ENCODE measurements at regions of chr11 and their contacts with region 1.

Region 1: GRCh38 chr11:65366340-65366773 is 11.8 kb downstream of the TIGD3 start:
- DNase-seq: peak; percentile 73
- ATAC-seq: peak; percentile 58
- H3K4me3 ChIP-seq: no peak overlapping the region
- H3K4me3 Mint-ChIP-seq: no peak overlapping the region
- H3K27ac ChIP-seq: no peak overlapping the region
- H3K27ac Mint-ChIP-seq: no peak overlapping the region
- H3K4me1 ChIP-seq: peaks cover 17 to 33% of the 10 kb centered on the region in 2 donors
- H3K4me1 Mint-ChIP-seq: peaks cover 21% of the 10 kb centered on the region
- H3K27me3 ChIP-seq: no peaks in the 10 kb centered on the region
- H3K27me3 Mint-ChIP-seq: no peaks in the 10 kb centered on the region
- CTCF ChIP-seq: peak; percentile 81

Region 2: DNA sequence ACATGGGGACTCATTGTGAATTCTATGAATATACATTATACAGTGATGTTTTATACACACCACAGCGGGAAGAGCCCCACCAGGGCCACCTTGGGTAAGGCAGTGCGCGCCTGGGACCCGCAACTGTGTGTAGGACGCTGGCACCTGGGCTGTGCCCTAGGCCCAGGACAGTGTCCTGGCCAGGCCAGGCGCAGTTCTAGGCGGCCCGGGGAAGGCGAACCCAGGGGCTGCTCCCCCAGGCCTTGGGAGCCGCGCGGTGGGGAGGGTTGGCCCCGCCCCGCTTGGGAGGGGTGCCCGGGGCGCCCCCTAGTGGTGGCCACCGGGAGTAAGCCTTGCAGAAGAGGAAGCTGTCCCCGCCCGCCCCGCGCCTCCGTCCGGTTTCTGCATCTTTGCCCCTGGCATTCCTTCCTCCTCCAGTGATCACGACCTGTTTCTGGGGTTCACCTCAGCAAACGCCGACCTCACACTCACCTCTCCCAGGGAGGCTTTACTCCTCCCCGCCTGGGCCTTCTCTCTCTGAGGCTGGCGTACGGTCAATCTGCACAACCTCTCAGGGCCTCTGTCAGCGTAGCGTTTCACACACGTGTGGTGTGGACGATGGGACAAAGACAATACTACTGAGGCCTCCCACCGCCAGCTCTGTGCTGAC is 478.5 kb before region 1 on chr11:
- CTCF ChIA-PET with region 1: no interaction called
- POLR2A ChIA-PET with region 1: no interaction called
- intact Hi-C with region 1: no loop called
- DNase-seq: peak; percentile 90
- ATAC-seq: peak; percentile 97
- H3K4me3 ChIP-seq: peak overlapping the region in 4 of 5 experiments; percentile 14 to 50 (median 42)
- H3K4me3 Mint-ChIP-seq: peak overlapping the region; percentile 84
- H3K27ac ChIP-seq: peak overlapping the region; percentile 43 to 56
- H3K27ac Mint-ChIP-seq: peak overlapping the region; percentile 88
- H3K4me1 ChIP-seq: peaks cover 25 to 33% of the 10 kb centered on the region in 2 donors
- H3K4me1 Mint-ChIP-seq: peaks cover 34% of the 10 kb centered on the region
- H3K27me3 ChIP-seq: no peaks in the 10 kb centered on the region
- H3K27me3 Mint-ChIP-seq: no peaks in the 10 kb centered on the region
- CTCF ChIP-seq: peak; percentile 91

Region 3: DNA sequence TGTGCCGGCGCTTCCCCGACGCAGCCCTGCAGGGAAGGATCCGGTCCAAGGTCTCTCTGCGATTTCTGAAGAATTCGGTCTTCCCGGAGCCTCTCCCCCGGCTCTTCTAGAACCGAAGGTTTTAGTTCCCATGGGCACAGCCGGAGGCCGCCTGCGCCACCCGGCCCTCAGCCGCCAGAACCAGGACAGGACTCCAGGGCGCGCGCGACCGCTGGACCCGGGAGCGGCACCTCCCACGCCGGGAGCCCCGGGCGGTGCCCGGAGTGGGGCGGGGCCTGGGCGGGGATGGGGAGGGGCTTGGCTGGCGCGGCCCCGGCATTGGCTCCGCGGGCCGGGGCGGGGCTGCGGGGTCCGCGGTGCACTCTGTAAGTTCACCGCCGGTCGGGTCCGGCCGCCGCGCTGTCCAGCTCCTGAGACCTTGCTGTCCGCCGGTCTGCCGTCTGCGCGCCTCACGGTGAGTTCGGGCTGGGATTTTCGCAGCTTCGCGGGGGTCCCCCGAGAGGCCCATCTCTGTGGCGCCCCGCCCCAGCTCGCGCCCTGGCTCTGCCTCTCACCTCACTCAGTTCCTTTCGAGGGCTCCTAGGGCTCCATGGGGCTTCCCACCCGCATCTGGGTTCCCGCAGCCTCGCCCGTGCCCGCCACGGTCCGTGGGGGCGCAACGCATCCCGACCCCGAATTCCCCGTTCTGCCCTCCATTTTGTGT is 51.7 kb before region 1 on chr11 and contains the start of gene CDC42EP2:
- CTCF ChIA-PET with region 1: interaction called, 11 read pairs
- POLR2A ChIA-PET with region 1: no interaction called
- intact Hi-C with region 1: no loop called
- DNase-seq: peak; percentile 85
- ATAC-seq: peak; percentile 96
- H3K4me3 ChIP-seq: peak within 1 kb of the TSS; percentile 40 to 85 (median 81)
- H3K4me3 Mint-ChIP-seq: peak within 1 kb of the TSS; percentile 84
- H3K27ac ChIP-seq: peak within 1 kb of the TSS in 1 of 2 donors; percentile 51
- H3K27ac Mint-ChIP-seq: no peak within 1 kb of the TSS
- H3K4me1 ChIP-seq: peaks cover 8 to 17% of the 10 kb centered on the region in 2 donors
- H3K4me1 Mint-ChIP-seq: peaks cover 10% of the 10 kb centered on the region
- H3K27me3 ChIP-seq: peaks cover 0 to 12% (median 5%) of the 10 kb centered on the region in 4 experiments
- H3K27me3 Mint-ChIP-seq: peaks cover 9% of the 10 kb centered on the region
- CTCF ChIP-seq: no peak
- total RNA-seq, gene CDC42EP2: 1.1 and 1.5 TPM in 2 replicates

Region 4: DNA sequence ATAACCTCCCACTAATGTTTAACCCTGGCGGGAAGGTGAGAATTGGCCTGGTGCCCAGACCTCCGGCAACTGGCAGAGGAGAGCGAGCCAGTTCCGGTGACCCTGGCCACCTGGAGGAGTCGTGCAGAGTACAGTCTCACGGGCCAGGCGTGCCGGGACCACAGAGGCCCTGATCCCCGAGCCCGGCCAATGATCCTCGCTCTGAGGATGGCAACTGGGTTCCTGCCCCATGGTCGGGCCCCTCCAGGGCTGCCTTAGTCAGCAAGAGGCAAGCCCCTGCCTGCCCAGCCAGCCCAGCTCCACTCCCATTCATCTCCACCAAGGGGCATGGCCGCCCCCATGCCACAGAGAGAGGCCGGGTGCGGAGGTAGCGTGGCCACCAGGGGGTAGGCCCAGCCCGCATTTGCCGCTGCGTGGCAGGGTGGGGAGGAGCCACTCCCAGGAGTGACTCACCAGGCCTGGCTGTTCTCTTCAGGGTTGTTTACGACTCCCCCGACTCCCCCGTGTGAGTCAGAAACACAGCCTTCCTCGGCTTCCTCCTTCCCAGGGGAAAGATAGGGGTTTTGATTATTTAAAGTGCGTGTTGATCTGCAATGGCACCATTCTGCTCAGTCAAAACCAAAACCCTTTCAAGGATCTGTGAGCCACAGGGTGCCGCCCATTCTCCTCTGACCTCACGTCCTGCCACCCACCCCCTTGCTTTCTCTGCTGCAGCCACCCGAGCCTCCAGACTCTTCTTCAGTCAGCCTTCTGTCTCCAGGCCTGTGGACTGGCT is 15.9 kb after region 1 on chr11 and contains the start of gene SLC25A45:
- CTCF ChIA-PET with region 1: interaction called, 17 read pairs
- POLR2A ChIA-PET with region 1: interaction called, 12 read pairs
- intact Hi-C with region 1: loop called (anchors 2 kb)
- DNase-seq: peak; percentile 93
- ATAC-seq: peak; percentile 83
- H3K4me3 ChIP-seq: peak within 1 kb of the TSS; percentile 44 to 81 (median 61)
- H3K4me3 Mint-ChIP-seq: peak within 1 kb of the TSS; percentile 92
- H3K27ac ChIP-seq: peak within 1 kb of the TSS; percentile 91
- H3K27ac Mint-ChIP-seq: peak within 1 kb of the TSS; percentile 98
- H3K4me1 ChIP-seq: peaks cover 35 to 71% of the 10 kb centered on the region in 2 donors
- H3K4me1 Mint-ChIP-seq: peaks cover 63% of the 10 kb centered on the region
- H3K27me3 ChIP-seq: no peaks in the 10 kb centered on the region
- H3K27me3 Mint-ChIP-seq: no peaks in the 10 kb centered on the region
- CTCF ChIP-seq: peak; percentile 85
- total RNA-seq, gene SLC25A45: 16.4 and 18.2 TPM in 2 replicates

Region 5: DNA sequence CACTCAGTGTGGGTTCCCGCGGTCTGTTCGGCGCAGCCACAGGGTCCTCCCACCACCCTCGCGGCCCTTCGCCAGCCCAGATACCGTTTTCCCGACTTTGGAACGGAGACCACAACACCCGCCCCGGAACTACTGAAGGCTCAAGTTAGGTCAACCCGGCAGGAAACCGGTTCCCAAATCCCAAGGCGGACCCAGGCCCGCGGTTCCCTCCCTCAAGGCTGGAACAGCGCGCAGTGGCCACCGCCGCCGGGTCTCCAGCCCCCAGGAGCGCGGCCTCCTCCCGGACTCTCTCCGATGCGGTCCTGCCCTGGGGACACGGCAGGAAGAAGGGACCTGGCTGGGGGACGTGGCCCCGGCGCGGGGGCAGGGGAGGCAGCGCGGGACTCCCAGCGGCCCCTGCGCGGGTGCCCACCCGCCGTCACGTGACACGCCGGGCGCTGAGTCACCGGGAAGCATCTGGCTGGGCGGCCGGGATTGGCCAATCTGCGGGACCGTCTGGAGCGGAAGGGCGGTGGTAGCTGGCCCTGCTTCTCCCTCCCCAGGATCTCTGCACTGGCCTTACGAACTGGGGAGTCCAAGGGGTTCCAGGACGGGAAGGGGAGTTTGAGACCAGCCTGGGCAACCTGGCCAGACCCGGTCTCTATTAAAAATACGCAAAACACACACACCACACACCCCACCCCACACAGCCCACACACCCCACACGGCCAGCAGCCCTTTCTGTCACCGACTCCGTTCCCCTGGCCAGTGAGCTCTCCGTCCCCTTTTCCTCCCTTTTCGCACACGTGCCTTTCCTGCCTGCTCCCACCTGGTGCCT is 111.0 kb after region 1 on chr11:
- CTCF ChIA-PET with region 1: interaction called, 4 read pairs
- POLR2A ChIA-PET with region 1: no interaction called
- intact Hi-C with region 1: loop called (anchors 1 kb)
- DNase-seq: peak; percentile 90
- ATAC-seq: peak; percentile 87
- H3K4me3 ChIP-seq: peak overlapping the region; percentile 61 to 93 (median 83)
- H3K4me3 Mint-ChIP-seq: peak overlapping the region; percentile 96
- H3K27ac ChIP-seq: peak overlapping the region; percentile 88 to 92
- H3K27ac Mint-ChIP-seq: peak overlapping the region; percentile 99
- H3K4me1 ChIP-seq: peaks cover 11 to 32% of the 10 kb centered on the region in 2 donors
- H3K4me1 Mint-ChIP-seq: peaks cover 14% of the 10 kb centered on the region
- H3K27me3 ChIP-seq: no peaks in the 10 kb centered on the region
- H3K27me3 Mint-ChIP-seq: no peaks in the 10 kb centered on the region
- CTCF ChIP-seq: no peak

Region 6: DNA sequence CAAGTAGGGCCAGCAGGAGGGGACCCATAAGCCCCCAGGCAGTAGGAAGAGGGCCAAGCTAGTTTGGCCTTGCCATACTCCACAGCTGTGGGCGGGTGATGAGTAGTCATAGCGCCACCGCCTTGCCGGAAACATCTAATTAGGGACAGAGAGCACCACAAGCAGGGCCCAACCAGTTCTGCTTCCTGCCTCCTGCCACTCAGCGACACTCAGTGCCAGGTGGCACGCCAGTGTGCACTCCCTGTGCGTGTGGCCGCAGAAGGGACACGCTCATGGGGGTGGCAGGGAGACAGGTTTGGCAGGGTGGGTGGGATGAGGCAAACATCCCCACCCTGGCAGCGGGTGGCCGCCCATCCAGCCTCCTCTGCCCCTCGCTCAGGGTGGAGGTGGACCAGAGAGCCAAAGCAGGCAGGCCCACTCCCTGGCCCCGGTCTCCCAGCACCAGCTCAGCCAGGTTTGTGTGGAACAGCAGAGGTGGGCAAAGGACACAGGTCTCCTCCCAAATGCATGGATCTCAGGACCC is 425.4 kb after region 1 on chr11:
- CTCF ChIA-PET with region 1: no interaction called
- POLR2A ChIA-PET with region 1: interaction called, 12 read pairs
- intact Hi-C with region 1: no loop called
- DNase-seq: no peak
- ATAC-seq: peak; percentile 94
- H3K4me3 ChIP-seq: no peak overlapping the region
- H3K4me3 Mint-ChIP-seq: peak overlapping the region; percentile 34
- H3K27ac ChIP-seq: peak overlapping the region in 1 of 2 donors; percentile 18
- H3K27ac Mint-ChIP-seq: peak overlapping the region; percentile 89
- H3K4me1 ChIP-seq: peaks cover 22 to 36% of the 10 kb centered on the region in 2 donors
- H3K4me1 Mint-ChIP-seq: peaks cover 42% of the 10 kb centered on the region
- H3K27me3 ChIP-seq: peaks cover 0 to 49% (median 22%) of the 10 kb centered on the region in 4 experiments
- H3K27me3 Mint-ChIP-seq: peaks cover 6% of the 10 kb centered on the region
- CTCF ChIP-seq: no peak